Activated B cell treated with CpG ODN at 0.5 μM for 24 hours (primary cell): ENCODE measurements at regions of chr16 and their contacts with region 1.

Region 1: GRCh38 chr16:30769371-30770089 is 7.4 kb downstream of the RNF40 start:
- DNase-seq: no peak
- ATAC-seq: peak; percentile 64
- H3K4me3 Mint-ChIP-seq: no peak overlapping the region
- H3K27ac Mint-ChIP-seq: no peak overlapping the region
- H3K4me1 Mint-ChIP-seq: peaks cover 29% of the 10 kb centered on the region
- H3K27me3 Mint-ChIP-seq: no peaks in the 10 kb centered on the region
- CTCF ChIP-seq: no peak

Region 2: DNA sequence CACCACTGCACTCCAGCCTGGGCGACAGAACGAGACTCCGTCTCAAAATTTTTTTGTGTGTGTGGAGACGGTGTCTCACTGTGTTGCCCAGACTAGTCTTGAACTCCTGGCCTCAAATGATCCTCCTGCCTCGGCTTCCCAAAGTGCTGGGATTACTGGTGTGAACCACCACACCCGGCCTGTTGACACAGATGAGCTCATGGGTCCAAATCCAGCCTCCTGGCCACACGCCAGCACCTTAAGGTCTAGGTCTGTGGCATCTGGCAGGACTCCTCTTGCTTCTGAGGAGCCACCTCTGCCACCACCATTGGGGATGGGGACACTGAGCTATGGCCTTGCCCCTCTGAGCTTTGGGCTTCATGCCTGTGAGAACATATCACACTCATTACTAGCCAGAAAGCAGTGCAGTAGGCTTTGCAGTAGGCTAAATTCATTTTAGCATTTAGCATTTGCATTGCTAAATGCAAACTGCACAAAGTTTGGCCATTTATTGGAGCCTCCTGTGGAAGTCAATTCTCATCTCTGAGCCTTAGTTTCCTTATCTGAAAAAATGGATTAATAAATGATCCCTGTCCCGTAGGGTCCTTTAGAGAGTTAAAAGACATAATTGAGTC is 901.0 kb before region 1 on chr16:
- CTCF ChIA-PET with region 1: no interaction called
- POLR2A ChIA-PET with region 1: interaction called, 10 read pairs
- intact Hi-C with region 1: no loop called
- DNase-seq: no peak
- ATAC-seq: no peak
- H3K4me3 Mint-ChIP-seq: no peak overlapping the region
- H3K27ac Mint-ChIP-seq: no peak overlapping the region
- H3K4me1 Mint-ChIP-seq: peaks cover under 1% of the 10 kb centered on the region
- H3K27me3 Mint-ChIP-seq: peaks cover 8% of the 10 kb centered on the region
- CTCF ChIP-seq: no peak

Region 3: DNA sequence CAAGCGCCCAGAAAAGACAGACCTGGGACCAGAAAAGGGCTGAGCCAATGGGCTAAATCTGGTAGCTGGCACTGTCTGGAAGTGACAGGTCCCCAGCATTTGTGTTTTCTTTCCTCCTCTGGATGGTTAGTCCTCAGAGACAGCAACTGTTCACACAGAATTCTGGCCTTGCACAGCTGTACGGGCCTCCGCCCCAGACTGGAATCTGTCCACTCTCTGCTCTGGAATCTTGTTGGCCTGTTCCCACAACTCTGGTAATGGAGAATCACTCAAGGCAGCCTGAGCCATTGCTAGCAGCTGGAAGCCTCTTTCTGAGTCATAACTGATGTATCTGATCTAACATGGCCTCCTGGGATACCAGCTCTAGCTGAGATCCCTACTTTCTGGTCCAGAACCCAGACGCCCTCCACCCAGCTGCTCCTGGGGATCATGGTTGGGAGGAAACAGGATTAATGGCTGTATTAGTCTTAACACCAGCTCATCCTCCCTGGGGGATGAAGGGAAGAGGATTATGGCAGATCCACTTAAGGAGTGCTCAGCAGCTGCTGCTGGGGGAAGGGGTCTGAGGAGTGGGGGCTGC is 295.4 kb after region 1 on chr16:
- CTCF ChIA-PET with region 1: no interaction called
- POLR2A ChIA-PET with region 1: no interaction called
- intact Hi-C with region 1: no loop called
- DNase-seq: no peak
- ATAC-seq: no peak
- H3K4me3 Mint-ChIP-seq: no peak overlapping the region
- H3K27ac Mint-ChIP-seq: no peak overlapping the region
- H3K4me1 Mint-ChIP-seq: peaks cover 7% of the 10 kb centered on the region
- H3K27me3 Mint-ChIP-seq: no peaks in the 10 kb centered on the region
- CTCF ChIP-seq: no peak